Activated CD4-positive, alpha-beta T cell treated with anti-CD3 and anti-CD28 coated beads, Interleukin-2, amount 10 ng/mL, durations not matched to agents 24 days and 14 days (primary cell): ENCODE measurements at regions of chr11 and their contacts with region 1.

Region 1: GRCh38 chr11:111283945-111284481 is 14.3 kb upstream of the POU2AF3 start:
- DNase-seq: no peak
- H3K4me3 Mint-ChIP-seq: no peak overlapping the region
- H3K27ac Mint-ChIP-seq: no peak overlapping the region
- H3K4me1 Mint-ChIP-seq: no peaks in the 10 kb centered on the region
- H3K27me3 Mint-ChIP-seq: peaks cover 4% of the 10 kb centered on the region

Region 2: DNA sequence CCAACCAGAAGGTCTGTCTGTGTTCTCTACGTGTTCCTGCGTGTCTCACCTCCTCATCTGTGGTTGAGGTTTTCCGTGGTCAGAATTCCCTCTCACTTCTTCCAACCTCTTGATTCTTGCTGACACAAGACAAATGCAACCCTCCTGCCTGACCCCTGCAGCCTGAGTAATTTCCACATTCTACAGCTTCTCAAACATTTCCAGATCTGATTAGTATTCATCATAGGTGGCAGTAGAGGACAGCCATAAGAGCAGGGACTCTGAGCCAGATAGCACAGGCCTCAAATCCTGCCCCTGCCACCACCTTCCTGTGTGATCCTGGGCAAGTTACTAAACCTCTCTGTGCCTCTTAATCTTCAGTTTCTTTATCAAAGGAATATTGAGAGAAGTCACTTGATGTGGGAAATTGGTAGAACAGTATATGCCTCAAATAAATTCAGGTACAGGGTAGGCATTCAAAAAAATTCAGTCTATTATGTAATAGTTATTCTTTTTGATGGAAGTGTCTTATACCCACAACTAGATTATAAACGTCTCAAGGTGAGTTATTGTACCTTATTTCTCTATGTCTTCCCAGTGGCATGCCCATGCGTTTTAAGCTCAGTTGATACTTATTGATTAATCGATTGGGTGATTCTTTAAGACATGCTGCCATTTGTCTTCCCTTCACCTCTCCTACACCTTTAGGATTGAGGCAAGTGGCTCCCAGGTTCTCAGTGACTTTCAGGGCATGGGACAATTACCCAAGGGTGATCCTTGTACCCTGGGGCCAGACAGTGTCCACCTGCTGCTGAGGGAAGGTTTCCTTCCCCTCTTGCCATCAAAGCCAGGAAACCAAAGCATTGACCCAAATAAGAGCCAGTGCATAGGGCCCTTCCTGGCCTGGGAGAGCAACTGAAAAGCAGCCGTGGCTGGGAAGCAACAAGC is 75.5 kb after region 1 on chr11:
- intact Hi-C with region 1: loop called (anchors 5 kb)
- DNase-seq: peak; percentile 55
- H3K4me3 Mint-ChIP-seq: peak overlapping the region; percentile 12
- H3K27ac Mint-ChIP-seq: no peak overlapping the region
- H3K4me1 Mint-ChIP-seq: peaks cover 15% of the 10 kb centered on the region
- H3K27me3 Mint-ChIP-seq: no peaks in the 10 kb centered on the region

Region 3: GRCh38 chr11:111422494-111423249 is 138.7 kb after region 1 on chr11:
- intact Hi-C with region 1: loop called (anchors 1 kb)
- DNase-seq: peak; percentile 84
- H3K4me3 Mint-ChIP-seq: no peak overlapping the region
- H3K27ac Mint-ChIP-seq: peak overlapping the region; percentile 22
- H3K4me1 Mint-ChIP-seq: peaks cover 23% of the 10 kb centered on the region
- H3K27me3 Mint-ChIP-seq: peaks cover 2% of the 10 kb centered on the region

Region 4: GRCh38 chr11:111429066-111429506 is 145.1 kb after region 1 on chr11:
- intact Hi-C with region 1: loop called (anchors 1 kb)
- DNase-seq: peak; percentile 89
- H3K4me3 Mint-ChIP-seq: no peak overlapping the region
- H3K27ac Mint-ChIP-seq: no peak overlapping the region
- H3K4me1 Mint-ChIP-seq: peaks cover 4% of the 10 kb centered on the region
- H3K27me3 Mint-ChIP-seq: peaks cover 12% of the 10 kb centered on the region

Region 5: DNA sequence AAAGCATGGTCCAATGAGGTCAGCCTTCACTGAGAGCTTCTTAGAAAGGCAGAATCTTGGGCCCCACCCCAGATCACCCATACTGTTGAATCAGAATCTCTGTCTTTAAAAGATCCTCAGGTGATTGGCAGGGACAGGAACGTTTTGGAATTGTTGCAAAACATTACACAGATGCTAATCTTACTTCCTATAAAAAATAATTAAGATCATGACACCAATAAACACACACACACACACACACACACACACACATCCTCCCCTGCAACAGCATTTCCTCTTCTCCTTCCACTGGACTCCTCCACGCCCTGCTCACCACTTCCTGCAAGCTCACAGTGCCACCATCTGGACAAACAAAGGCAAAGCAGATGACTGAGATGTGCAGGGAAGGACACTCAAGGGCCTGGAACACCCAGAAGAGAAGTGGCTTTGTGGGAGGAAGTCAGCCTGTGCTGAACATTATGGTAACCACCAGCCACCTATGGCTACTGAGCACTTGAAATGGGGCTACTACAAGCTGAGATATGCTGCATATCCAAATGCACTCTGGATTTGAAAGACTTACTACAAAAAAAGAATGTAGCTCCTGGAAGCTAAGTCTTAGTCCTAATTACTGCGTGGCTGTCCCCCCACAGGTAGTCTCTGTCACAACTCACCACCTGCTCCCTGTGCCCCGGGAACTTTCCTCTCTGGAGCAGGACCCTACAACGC is 162.5 kb after region 1 on chr11:
- intact Hi-C with region 1: loop called (anchors 1 kb)
- DNase-seq: peak; percentile 94
- H3K4me3 Mint-ChIP-seq: no peak overlapping the region
- H3K27ac Mint-ChIP-seq: peak overlapping the region; percentile 4
- H3K4me1 Mint-ChIP-seq: peaks cover 14% of the 10 kb centered on the region
- H3K27me3 Mint-ChIP-seq: peaks cover 2% of the 10 kb centered on the region

Region 6: GRCh38 chr11:111565114-111565720 is 281.2 kb after region 1 on chr11:
- intact Hi-C with region 1: loop called (anchors 10 kb)
- DNase-seq: peak; percentile 89
- H3K4me3 Mint-ChIP-seq: no peak overlapping the region
- H3K27ac Mint-ChIP-seq: no peak overlapping the region
- H3K4me1 Mint-ChIP-seq: no peaks in the 10 kb centered on the region
- H3K27me3 Mint-ChIP-seq: no peaks in the 10 kb centered on the region